Heart left ventricle (tissue), 16 donors: ENCODE measurements at regions of chr10 and their contacts with region 1.

Region 1: DNA sequence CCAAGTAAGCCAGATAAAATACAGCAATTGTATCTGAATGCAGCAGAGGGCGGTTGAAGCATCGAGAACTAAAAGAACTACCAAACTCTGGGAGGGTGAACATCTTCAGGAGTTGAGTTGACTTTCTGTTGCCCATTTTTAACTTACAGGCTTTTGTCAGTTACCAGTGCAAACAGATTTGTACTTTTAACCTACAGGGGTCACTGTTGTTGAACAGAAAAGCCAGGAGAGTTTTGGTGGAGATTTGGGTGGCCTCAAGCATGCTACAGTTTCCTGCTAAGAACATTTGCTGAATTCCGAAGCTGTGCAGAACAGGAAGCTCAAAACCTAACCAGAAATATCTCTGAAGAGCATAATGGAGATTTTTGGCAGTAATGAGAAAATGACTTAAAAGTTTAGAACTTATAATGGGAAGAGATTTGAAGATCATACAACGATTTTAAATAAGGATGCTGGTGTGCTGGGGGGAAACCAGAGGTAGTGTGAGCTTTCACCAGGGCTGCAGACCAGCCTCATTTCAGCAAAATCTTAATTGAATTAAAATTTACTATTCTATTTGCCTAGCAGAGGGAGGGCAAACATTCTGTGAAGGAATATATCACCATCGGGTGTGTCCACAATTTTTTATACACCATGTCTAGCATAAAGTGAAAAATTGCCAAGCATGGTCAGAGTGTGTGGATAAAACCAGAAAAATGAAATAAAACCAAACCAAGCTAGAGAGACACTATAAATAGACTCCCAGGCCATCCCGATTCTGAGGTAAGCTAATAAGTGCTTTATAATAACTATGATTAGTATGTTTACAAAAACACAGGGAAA is 208.6 kb upstream of the CCDC6 start:
- DNase-seq: no peak
- ATAC-seq: peak; percentile 37 to 78 (median 54)
- H3K4me3 ChIP-seq: no peak overlapping the region
- H3K27ac ChIP-seq: no peak overlapping the region
- H3K4me1 ChIP-seq: peaks cover 0 to 10% (median 0%) of the 10 kb centered on the region in 12 donors
- H3K27me3 ChIP-seq: no peaks in the 10 kb centered on the region
- CTCF ChIP-seq: peak; percentile 14 to 60 (median 46)
- POLR2A ChIP-seq: no peak

Region 2: GRCh38 chr10:59748834-59749233 is 366.1 kb before region 1 on chr10:
- intact Hi-C with region 1: no loop called
- DNase-seq: no peak
- ATAC-seq: peak in 2 of 4 donors; percentile 42 to 65
- H3K4me3 ChIP-seq: no peak overlapping the region
- H3K27ac ChIP-seq: no peak overlapping the region
- H3K4me1 ChIP-seq: peaks cover 0 to 8% (median 0%) of the 10 kb centered on the region in 12 donors
- H3K27me3 ChIP-seq: no peaks in the 10 kb centered on the region
- CTCF ChIP-seq: no peak
- POLR2A ChIP-seq: no peak

Region 3: DNA sequence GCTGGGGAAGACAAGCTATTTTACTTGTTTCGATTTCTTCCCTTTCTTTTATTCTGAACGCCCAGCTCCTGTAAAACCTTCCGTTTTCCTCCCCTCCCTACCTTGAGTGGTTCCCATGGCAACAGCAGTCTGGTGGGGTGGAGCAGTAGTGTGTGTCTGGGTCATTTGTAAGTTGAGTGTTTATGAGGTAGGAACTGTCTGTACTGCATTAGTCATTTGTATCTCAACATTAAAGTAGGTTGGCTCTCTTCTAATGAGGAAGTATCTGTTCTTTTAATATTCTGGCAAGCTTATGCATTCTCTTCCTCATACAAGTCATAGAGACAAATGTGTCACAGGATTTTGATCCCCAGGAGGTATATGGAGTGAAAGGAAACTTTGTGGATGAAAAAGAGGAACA is 123.3 kb before region 1 on chr10:
- intact Hi-C with region 1: no loop called
- DNase-seq: peak in 1 of 5 donors; percentile 33
- ATAC-seq: peak; percentile 64 to 84 (median 79)
- H3K4me3 ChIP-seq: no peak overlapping the region
- H3K27ac ChIP-seq: no peak overlapping the region
- H3K4me1 ChIP-seq: peaks cover 0 to 10% (median 0%) of the 10 kb centered on the region in 12 donors
- H3K27me3 ChIP-seq: no peaks in the 10 kb centered on the region
- CTCF ChIP-seq: no peak
- POLR2A ChIP-seq: no peak

Region 4: DNA sequence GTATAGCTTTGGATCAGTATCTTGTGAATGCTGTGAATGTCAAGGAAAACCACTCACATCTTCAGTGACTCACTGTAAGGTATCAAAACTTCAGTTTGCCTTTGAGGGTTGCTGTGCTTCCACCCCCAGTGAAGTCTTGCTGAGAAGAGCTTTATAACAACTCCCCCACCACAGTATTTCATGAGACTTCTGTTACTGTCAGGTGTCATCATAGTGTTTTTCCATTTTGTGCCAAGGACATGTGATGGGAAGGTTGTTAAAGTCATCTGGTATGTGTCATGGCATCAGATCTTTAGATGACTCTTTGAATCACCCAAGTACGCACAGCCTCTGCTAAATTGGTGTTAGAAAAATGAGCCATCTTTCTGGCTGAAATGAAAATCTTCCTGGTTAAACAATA is 93.7 kb before region 1 on chr10:
- intact Hi-C with region 1: no loop called
- DNase-seq: no peak
- ATAC-seq: no peak
- H3K4me3 ChIP-seq: no peak overlapping the region
- H3K27ac ChIP-seq: no peak overlapping the region
- H3K4me1 ChIP-seq: peaks cover 0 to 4% (median 0%) of the 10 kb centered on the region in 12 donors
- H3K27me3 ChIP-seq: no peaks in the 10 kb centered on the region
- CTCF ChIP-seq: no peak
- POLR2A ChIP-seq: no peak

Region 5: GRCh38 chr10:60148264-60148840 is 33.4 kb after region 1 on chr10:
- intact Hi-C with region 1: no loop called
- DNase-seq: no peak
- ATAC-seq: peak in 2 of 4 donors; percentile 58 to 72
- H3K4me3 ChIP-seq: no peak overlapping the region
- H3K27ac ChIP-seq: peak overlapping the region in 7 of 12 donors; percentile 2 to 61 (median 15)
- H3K4me1 ChIP-seq: peaks cover 0 to 26% (median 14%) of the 10 kb centered on the region in 12 donors
- H3K27me3 ChIP-seq: no peaks in the 10 kb centered on the region
- CTCF ChIP-seq: no peak
- POLR2A ChIP-seq: no peak

Region 6: GRCh38 chr10:60197206-60197605 is 82.2 kb after region 1 on chr10:
- intact Hi-C with region 1: loop called in 1 of 10 experiments (anchors 5 kb)
- DNase-seq: no peak
- ATAC-seq: no peak
- H3K4me3 ChIP-seq: no peak overlapping the region
- H3K27ac ChIP-seq: no peak overlapping the region
- H3K4me1 ChIP-seq: peaks cover 0 to 15% (median 2%) of the 10 kb centered on the region in 12 donors
- H3K27me3 ChIP-seq: no peaks in the 10 kb centered on the region
- CTCF ChIP-seq: no peak
- POLR2A ChIP-seq: no peak

Region 7: GRCh38 chr10:60208676-60209269 is 93.8 kb after region 1 on chr10:
- intact Hi-C with region 1: loop called in 1 of 10 experiments (anchors 5 kb)
- DNase-seq: no peak
- ATAC-seq: peak in 2 of 4 donors; percentile 27 to 53
- H3K4me3 ChIP-seq: no peak overlapping the region
- H3K27ac ChIP-seq: no peak overlapping the region
- H3K4me1 ChIP-seq: peaks cover 0 to 11% (median 5%) of the 10 kb centered on the region in 12 donors
- H3K27me3 ChIP-seq: no peaks in the 10 kb centered on the region
- CTCF ChIP-seq: peak; percentile 28 to 75 (median 58)
- POLR2A ChIP-seq: no peak